Dorsolateral prefrontal cortex (tissue), 120 donors: ENCODE measurements at regions of chrX and their contacts with region 1.

Region 1: DNA sequence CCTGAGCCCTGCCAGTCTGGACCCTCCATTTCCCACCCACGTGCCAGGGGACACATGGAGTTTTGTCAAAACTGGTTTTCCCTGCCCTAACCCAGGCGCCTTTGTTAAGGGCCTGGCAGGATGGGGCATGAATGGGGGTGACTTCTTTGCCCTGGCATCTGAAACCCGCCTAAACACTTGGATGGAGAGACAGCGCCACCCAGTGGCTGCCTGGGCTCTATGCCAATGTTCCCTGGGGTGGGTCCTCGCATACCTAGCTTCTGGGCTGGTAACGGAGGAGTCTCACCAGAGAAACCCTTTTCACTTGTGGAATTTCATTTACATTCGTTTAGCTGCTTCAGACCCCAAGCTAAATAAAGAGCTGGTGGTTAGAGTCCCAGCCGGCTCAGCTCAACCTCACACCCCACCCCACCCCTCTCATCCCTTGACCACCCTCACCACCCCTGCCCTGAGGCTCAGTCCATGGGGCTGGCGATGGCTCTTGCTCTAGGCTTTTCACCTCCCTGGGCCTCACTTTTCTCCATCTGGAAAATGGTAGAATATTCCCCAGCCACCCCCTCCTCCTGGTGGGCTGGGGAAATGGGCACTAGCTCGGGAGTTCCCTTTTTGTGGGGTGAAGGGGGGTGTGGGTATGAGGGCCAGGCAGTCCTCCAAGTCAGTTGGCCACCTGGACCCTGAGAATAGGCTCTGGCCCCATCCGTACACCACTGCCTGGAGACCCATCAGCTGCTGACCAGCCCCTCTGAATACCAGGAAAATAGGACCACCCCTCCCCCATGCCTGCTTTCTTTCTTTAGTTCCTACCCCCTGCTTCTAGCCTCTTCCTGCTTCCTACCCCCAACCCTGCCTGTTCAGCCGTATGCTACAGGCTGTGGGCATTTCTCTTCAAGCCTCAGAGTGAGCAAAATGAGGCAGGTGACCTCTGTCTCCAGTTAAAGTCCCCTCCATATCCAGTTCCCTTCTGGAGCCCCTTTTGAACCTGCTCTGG is 57.1 kb upstream of the PJA1 start:
- DNase-seq: peak; percentile 50 to 83 (median 68)
- H3K4me3 ChIP-seq: peak overlapping the region in 1 of 59 donors; percentile 9
- H3K27ac ChIP-seq: no peak overlapping the region
- H3K27me3 ChIP-seq: peaks cover 0 to 79% (median 15%) of the 10 kb centered on the region in 45 donors
- CTCF ChIP-seq: peak; percentile 59 to 84 (median 77)

Region 2: GRCh38 chrX:69010339-69010738 is 212.1 kb before region 1 on chrX:
- intact Hi-C with region 1: no loop called
- DNase-seq: no peak
- H3K4me3 ChIP-seq: no peak overlapping the region
- H3K27ac ChIP-seq: no peak overlapping the region
- H3K27me3 ChIP-seq: peaks cover 0 to 67% (median 11%) of the 10 kb centered on the region in 45 donors
- CTCF ChIP-seq: no peak

Region 3: GRCh38 chrX:69093960-69094871 is 128.2 kb before region 1 on chrX:
- intact Hi-C with region 1: loop called in 1 of 2 experiments (anchors 2 kb)
- DNase-seq: peak in 5 of 10 donors; percentile 14 to 64 (median 38)
- H3K4me3 ChIP-seq: no peak overlapping the region
- H3K27ac ChIP-seq: no peak overlapping the region
- H3K27me3 ChIP-seq: peaks cover 0 to 52% (median 8%) of the 10 kb centered on the region in 45 donors
- CTCF ChIP-seq: peak in 55 of 56 donors; percentile 22 to 71 (median 58)

Region 4: DNA sequence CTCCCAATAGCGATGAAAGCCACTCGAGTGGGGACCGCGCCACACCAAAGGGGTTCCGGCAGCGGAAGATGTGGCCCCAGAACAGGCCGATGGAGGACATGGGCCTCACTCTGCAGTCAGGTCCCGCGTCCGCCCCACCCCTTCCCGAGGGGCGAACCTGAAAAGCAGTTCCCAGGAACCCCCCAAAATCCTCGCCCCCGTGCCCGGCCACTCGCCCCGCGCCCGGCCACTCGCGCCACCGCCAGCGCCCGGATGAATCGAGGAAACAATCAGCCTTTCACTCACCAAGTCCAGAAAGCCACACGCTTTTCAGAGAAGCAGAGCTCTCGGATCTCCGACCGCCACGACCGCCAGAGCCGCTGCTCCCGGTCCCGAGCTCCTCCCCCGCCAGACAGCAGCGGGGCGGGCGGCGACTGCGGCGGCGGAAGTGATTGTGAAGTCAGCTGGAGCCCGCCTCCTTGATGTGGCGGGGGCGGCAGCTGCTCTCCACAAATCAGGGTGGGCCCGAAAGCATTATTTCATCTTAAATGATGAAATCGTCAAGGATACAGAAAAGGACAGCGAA is 57.2 kb before region 1 on chrX and contains the start of gene PJA1:
- intact Hi-C with region 1: loop called in 1 of 2 experiments (anchors 2 kb)
- DNase-seq: peak; percentile 54 to 83 (median 74)
- H3K4me3 ChIP-seq: peak within 1 kb of the TSS; percentile 51 to 81 (median 67)
- H3K27ac ChIP-seq: peak within 1 kb of the TSS; percentile 27 to 92 (median 83)
- H3K27me3 ChIP-seq: peaks cover 0 to 50% (median 8%) of the 10 kb centered on the region in 45 donors
- CTCF ChIP-seq: peak in 11 of 56 donors; percentile 2 to 26 (median 13)
- total RNA-seq, gene PJA1: 38.6 to 97.7 (median 68.0) TPM

Region 5: GRCh38 chrX:69285881-69286564 is 63.6 kb after region 1 on chrX:
- intact Hi-C with region 1: loop called in 1 of 2 experiments (anchors 5 kb)
- DNase-seq: peak in 8 of 10 donors; percentile 23 to 62 (median 52)
- H3K4me3 ChIP-seq: peak overlapping the region in 57 of 59 donors; percentile 9 to 66 (median 47)
- H3K27ac ChIP-seq: no peak overlapping the region
- H3K27me3 ChIP-seq: peaks cover 0 to 85% (median 17%) of the 10 kb centered on the region in 45 donors
- CTCF ChIP-seq: peak; percentile 36 to 90 (median 82)

Region 6: GRCh38 chrX:69357317-69357716 is 134.9 kb after region 1 on chrX:
- intact Hi-C with region 1: no loop called
- DNase-seq: no peak
- H3K4me3 ChIP-seq: no peak overlapping the region
- H3K27ac ChIP-seq: no peak overlapping the region
- H3K27me3 ChIP-seq: peaks cover 0 to 58% (median 18%) of the 10 kb centered on the region in 45 donors
- CTCF ChIP-seq: no peak

Region 7: GRCh38 chrX:69387567-69388487 is 165.4 kb after region 1 on chrX:
- intact Hi-C with region 1: loop called in 1 of 2 experiments (anchors 10 kb)
- DNase-seq: peak in 8 of 10 donors; percentile 18 to 56 (median 28)
- H3K4me3 ChIP-seq: no peak overlapping the region
- H3K27ac ChIP-seq: no peak overlapping the region
- H3K27me3 ChIP-seq: peaks cover 0 to 100% (median 55%) of the 10 kb centered on the region in 45 donors
- CTCF ChIP-seq: peak in 55 of 56 donors; percentile 16 to 77 (median 64)